AG04449 (cell line): ENCODE measurements at regions of chr2 and their contacts with region 1.

Region 1: DNA sequence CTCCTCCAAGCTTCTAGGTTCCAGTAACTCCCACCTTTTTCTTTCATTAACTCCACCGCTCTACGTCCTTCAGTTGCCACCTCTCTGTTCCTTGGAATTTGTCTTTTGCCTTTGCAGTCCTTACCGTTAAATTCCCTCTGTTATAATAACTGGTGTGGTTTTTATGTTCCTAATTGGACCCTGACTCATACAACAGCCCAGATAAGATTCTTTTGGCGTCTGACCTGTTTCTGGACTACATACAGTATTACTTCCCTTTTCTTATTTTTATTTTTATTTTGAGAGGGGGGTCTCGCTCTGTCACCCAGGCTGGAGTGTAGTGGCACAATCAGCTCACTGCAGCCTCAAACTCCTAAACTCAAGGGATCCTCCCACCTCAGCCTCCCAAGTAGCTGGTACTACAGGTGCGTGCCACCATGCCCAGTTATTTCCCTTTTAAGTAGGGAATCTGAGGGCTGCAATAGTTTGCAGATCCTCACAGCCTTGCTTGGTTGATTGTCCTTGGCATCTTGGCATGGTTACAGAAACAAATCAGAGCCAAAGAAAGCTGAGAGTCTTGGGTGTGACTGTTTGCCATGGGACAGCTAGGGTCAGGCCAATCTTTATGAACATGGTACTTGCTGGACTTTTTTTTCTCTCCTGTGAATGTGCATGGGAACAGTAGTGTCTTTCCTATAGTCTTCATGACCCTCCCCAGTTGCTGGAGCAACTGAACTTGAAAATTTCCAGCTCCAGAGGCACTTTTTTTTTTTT is 22.0 kb downstream of the TCF23 start:
- DNase-seq: no peak
- H3K4me3 ChIP-seq: no peak overlapping the region
- CTCF ChIP-seq: no peak

Region 2: GRCh38 chr2:26840937-26841613 is 329.7 kb before region 1 on chr2:
- CTCF ChIA-PET with region 1: no interaction called
- POLR2A ChIA-PET with region 1: no interaction called
- DNase-seq: no peak
- H3K4me3 ChIP-seq: no peak overlapping the region
- CTCF ChIP-seq: no peak

Region 3: GRCh38 chr2:27152786-27153510 is 17.8 kb before region 1 on chr2:
- CTCF ChIA-PET with region 1: interaction called, 56 read pairs
- POLR2A ChIA-PET with region 1: no interaction called
- DNase-seq: no peak
- H3K4me3 ChIP-seq: no peak overlapping the region
- CTCF ChIP-seq: no peak

Region 4: DNA sequence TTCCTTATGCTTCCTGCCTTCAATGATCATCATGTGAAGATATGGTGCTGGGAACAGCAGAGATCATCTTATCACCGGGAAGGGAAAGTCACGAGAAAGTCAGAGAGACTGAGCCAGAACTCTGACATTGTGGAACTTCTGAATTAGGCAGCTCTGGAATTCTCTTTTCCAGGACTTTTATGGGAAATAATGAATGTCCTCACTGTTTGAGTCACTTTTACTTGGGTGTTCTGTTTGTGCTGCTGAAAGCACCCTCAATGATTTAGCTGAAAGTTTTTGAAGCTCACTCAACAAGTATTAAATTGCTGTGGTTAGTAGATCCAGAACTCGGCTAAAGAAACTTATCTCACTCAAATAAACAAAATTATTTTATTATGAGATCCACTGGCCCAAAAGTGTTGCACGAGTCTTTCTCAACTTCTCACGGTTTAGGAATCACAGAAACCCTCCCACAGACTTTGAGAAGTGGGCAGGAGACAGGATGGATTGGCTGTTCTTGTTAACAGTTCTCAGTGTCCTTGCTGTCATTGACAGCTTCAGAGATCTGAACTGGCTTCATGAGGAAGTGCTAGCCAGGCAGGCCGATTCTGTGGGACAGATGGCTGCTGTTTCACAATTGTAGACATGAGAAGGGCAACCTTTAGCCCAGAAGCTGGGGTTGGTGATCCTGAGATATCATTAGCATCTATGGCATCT is 14.7 kb after region 1 on chr2:
- CTCF ChIA-PET with region 1: interaction called, 53 read pairs
- POLR2A ChIA-PET with region 1: no interaction called
- DNase-seq: peak; percentile 75
- H3K4me3 ChIP-seq: no peak overlapping the region; the same call in 1 of the 2 replicates
- CTCF ChIP-seq: no peak